ENCODE measurements at regions of chr3 and their contacts with region 1.

Region 1: GRCh38 chr3:151146071-151146730 is 56.8 kb downstream of the GPR171 start:
- DNase-seq: peak; percentile 38 to 67 (median 62)
- H3K4me3 ChIP-seq: no peak overlapping the region
- H3K27ac ChIP-seq: no peak overlapping the region
- H3K4me1 ChIP-seq: no peaks in the 10 kb centered on the region
- H3K27me3 ChIP-seq: no peaks in the 10 kb centered on the region
- CTCF ChIP-seq: peak; percentile 54 to 74 (median 65)
- EP300 ChIP-seq: no peak
- POLR2A ChIP-seq: no peak

Region 2: DNA sequence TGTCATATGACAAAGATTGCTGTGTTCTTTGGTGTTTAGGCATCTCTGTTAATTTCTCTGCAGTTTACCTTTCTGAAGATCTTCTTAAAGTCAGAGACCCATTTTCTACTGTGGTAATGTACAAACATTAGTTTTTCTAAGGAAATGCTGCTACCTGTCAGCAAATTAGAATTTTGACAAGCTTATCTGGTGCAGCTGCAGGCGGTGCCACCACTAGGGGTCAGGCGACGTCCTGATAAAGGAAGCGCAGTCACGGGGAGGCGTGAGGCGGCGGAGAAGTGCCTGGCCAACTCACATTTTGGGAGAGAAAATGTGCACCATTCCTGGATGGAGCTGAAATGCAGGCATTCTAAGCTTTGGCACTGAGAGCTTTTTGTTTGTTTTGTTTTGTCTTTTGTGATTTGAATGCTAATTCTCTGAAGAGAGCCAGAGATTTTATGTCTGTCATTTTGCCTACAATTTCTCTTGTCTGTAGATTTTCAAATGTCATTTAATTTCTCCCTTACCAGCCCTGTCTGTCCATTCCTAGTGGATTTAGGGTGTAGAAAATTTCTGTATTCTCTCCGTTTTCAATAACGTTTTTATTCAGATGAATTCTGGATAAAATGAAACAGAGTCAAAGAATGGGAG is 358.3 kb before region 1 on chr3:
- intact Hi-C with region 1: loop called in 2 of 4 experiments (anchors 5 to 10 kb)
- DNase-seq: peak; percentile 73 to 93 (median 84)
- H3K4me3 ChIP-seq: no peak overlapping the region
- H3K27ac ChIP-seq: no peak overlapping the region
- H3K4me1 ChIP-seq: no peaks in the 10 kb centered on the region
- H3K27me3 ChIP-seq: no peaks in the 10 kb centered on the region
- CTCF ChIP-seq: peak; percentile 33 to 72 (median 41)
- EP300 ChIP-seq: no peak
- POLR2A ChIP-seq: no peak

Region 3: GRCh38 chr3:150861851-150862250 is 284.4 kb before region 1 on chr3:
- intact Hi-C with region 1: loop called in 1 of 4 experiments (anchors 5 kb)
- DNase-seq: no peak
- H3K4me3 ChIP-seq: no peak overlapping the region
- H3K27ac ChIP-seq: no peak overlapping the region
- H3K4me1 ChIP-seq: no peaks in the 10 kb centered on the region
- H3K27me3 ChIP-seq: no peaks in the 10 kb centered on the region
- CTCF ChIP-seq: no peak
- EP300 ChIP-seq: no peak
- POLR2A ChIP-seq: no peak

Region 4: GRCh38 chr3:150870396-150870795 is 275.8 kb before region 1 on chr3:
- intact Hi-C with region 1: loop called in 1 of 4 experiments (anchors 10 kb)
- DNase-seq: no peak
- H3K4me3 ChIP-seq: no peak overlapping the region
- H3K27ac ChIP-seq: no peak overlapping the region
- H3K4me1 ChIP-seq: no peaks in the 10 kb centered on the region
- H3K27me3 ChIP-seq: no peaks in the 10 kb centered on the region
- CTCF ChIP-seq: no peak
- EP300 ChIP-seq: no peak
- POLR2A ChIP-seq: no peak

Region 5: GRCh38 chr3:151008699-151009098 is 137.5 kb before region 1 on chr3:
- intact Hi-C with region 1: no loop called
- DNase-seq: no peak
- H3K4me3 ChIP-seq: no peak overlapping the region
- H3K27ac ChIP-seq: no peak overlapping the region
- H3K4me1 ChIP-seq: no peaks in the 10 kb centered on the region
- H3K27me3 ChIP-seq: no peaks in the 10 kb centered on the region
- CTCF ChIP-seq: no peak
- EP300 ChIP-seq: no peak
- POLR2A ChIP-seq: no peak

Measured in ovary (tissue), 10 donors.